Activated naive CD4-positive, alpha-beta T cell treated with anti-CD3 and anti-CD28 coated beads for 36 hours (primary cell): ENCODE measurements at regions of chr11 and their contacts with region 1.

Region 1: GRCh38 chr11:104705490-104706190 is 192.6 kb downstream of the CASP12 start:
- DNase-seq: peak; percentile 89
- H3K4me3 Mint-ChIP-seq: peak overlapping the region; percentile 61
- H3K27ac Mint-ChIP-seq: peak overlapping the region; percentile 80
- H3K4me1 Mint-ChIP-seq: peaks cover 48% of the 10 kb centered on the region
- H3K27me3 Mint-ChIP-seq: no peaks in the 10 kb centered on the region

Region 2: DNA sequence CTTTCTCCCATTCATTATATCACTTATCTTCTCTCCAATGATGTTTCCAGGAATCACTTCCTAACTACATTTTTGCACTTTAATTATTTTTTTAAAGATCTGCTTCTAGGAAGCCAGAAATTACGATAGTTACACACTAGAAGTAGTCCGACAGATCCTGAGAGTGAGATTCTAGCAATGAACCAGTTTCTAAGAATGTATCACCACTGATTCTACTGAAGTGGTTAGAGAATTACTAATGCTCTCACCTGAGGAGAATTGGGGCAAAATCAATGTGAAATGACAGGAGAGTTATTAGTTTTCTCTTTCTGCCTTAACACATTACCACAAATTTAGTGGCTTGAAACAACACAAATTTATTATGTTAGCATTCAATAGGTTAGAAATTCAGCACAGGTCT is 48.6 kb before region 1 on chr11:
- CTCF ChIA-PET with region 1: no interaction called
- intact Hi-C with region 1: loop called (anchors 1 kb)
- DNase-seq: no peak
- H3K4me3 Mint-ChIP-seq: no peak overlapping the region
- H3K27ac Mint-ChIP-seq: no peak overlapping the region
- H3K4me1 Mint-ChIP-seq: peaks cover 20% of the 10 kb centered on the region
- H3K27me3 Mint-ChIP-seq: peaks cover 2% of the 10 kb centered on the region

Region 3: GRCh38 chr11:104728927-104729326 is 23.3 kb after region 1 on chr11:
- CTCF ChIA-PET with region 1: no interaction called
- intact Hi-C with region 1: no loop called
- DNase-seq: no peak
- H3K4me3 Mint-ChIP-seq: no peak overlapping the region
- H3K27ac Mint-ChIP-seq: no peak overlapping the region
- H3K4me1 Mint-ChIP-seq: peaks cover 6% of the 10 kb centered on the region
- H3K27me3 Mint-ChIP-seq: no peaks in the 10 kb centered on the region

Region 4: GRCh38 chr11:104799251-104799650 is 93.6 kb after region 1 on chr11:
- CTCF ChIA-PET with region 1: no interaction called
- intact Hi-C with region 1: loop called (anchors 1 kb)
- DNase-seq: no peak
- H3K4me3 Mint-ChIP-seq: peak overlapping the region; percentile 53
- H3K27ac Mint-ChIP-seq: peak overlapping the region; percentile 68
- H3K4me1 Mint-ChIP-seq: peaks cover 34% of the 10 kb centered on the region
- H3K27me3 Mint-ChIP-seq: no peaks in the 10 kb centered on the region

Region 5: DNA sequence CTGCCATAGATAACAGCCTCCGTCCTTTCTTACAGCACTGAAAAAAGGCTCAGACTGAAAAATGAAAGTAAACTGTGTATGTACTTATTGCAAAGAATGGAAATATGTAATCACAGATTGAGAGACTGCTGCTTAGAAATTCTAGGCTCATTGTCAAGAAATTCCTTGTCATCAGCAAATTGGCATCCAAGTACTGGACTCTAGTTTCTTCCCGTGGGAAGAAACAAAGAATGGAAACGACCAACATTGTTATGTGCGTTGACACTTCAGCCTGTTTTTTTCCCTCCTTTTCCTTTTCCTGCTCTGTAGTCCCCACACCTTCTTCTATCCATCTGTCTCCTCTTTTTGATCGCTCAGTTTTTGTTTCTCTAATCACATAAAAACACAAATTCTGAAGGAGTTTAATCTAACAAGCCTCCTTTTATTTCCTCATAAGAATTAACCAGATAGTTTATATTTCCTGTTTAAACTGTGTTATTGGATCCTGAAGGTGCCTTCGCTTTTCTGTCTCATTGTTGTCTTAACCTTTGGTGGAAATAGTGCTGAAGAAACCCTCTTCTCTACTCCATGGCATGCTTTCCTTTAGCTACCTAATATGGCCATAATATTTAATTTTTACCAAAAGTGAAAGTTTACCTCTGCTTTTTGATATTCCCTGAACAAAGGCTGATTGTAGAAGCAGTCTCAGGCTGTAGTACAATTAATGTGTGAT is 212.6 kb after region 1 on chr11:
- CTCF ChIA-PET with region 1: no interaction called
- intact Hi-C with region 1: loop called (anchors 1 kb)
- DNase-seq: no peak
- H3K4me3 Mint-ChIP-seq: peak overlapping the region; percentile 59
- H3K27ac Mint-ChIP-seq: peak overlapping the region; percentile 78
- H3K4me1 Mint-ChIP-seq: peaks cover 38% of the 10 kb centered on the region
- H3K27me3 Mint-ChIP-seq: no peaks in the 10 kb centered on the region

Region 6: GRCh38 chr11:105081412-105082087 is 375.9 kb after region 1 on chr11:
- CTCF ChIA-PET with region 1: no interaction called
- intact Hi-C with region 1: loop called (anchors 5 kb)
- DNase-seq: no peak
- H3K4me3 Mint-ChIP-seq: no peak overlapping the region
- H3K27ac Mint-ChIP-seq: no peak overlapping the region
- H3K4me1 Mint-ChIP-seq: peaks cover 20% of the 10 kb centered on the region
- H3K27me3 Mint-ChIP-seq: peaks cover 8% of the 10 kb centered on the region

Region 7: DNA sequence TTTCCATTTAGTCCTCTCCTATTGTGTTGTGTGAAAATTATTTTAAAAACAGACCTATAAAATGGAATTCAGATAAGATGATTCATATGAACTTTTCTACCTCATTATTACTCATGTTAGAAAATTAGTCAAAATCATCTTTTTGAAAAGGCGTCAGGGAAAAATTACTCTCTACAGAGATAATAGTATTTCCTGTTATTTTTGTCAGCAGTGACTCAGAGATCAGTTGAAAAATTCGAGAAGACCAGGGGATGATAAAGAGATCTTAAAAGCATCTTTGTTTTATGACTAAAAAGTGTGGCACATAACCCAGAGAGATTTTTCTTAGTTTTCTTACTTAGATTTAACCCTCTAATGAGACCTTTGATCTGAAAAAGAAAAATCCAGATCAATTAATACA is 591.8 kb after region 1 on chr11:
- CTCF ChIA-PET with region 1: no interaction called
- intact Hi-C with region 1: loop called (anchors 1 kb)
- DNase-seq: no peak
- H3K4me3 Mint-ChIP-seq: no peak overlapping the region
- H3K27ac Mint-ChIP-seq: peak overlapping the region; percentile 34
- H3K4me1 Mint-ChIP-seq: peaks cover 18% of the 10 kb centered on the region
- H3K27me3 Mint-ChIP-seq: peaks cover 11% of the 10 kb centered on the region

Region 8: DNA sequence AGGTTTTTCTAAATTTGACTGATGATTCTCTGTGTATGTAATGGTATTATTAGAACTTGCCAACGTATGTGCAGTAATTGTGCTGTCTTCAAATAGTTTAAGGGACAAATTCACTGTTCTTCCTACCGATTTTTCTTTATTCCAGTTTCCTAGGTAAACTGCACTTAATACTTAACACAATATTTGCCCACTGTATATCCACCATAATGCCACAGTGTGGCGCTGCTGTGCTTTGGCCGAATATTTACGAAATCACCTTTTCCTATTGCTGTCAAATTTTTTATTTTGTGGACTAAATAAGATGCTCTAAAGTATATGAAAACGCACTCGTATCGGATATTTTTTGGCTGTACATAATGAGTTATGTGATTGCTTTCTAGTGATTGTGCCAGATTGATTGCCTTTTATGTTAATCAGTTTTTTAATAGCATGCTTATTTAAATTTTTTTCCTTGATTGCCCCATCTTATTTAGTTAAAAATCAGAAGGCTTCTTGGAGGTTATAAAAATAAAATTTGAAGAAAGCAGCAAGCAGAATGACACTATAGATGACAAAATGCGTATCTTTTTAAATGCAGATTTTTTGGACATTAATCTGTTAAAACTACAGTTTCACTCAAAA is 1382.3 kb after region 1 on chr11:
- CTCF ChIA-PET with region 1: no interaction called
- intact Hi-C with region 1: loop called (anchors 5 kb)
- DNase-seq: peak; percentile 69
- H3K4me3 Mint-ChIP-seq: no peak overlapping the region
- H3K27ac Mint-ChIP-seq: no peak overlapping the region
- H3K4me1 Mint-ChIP-seq: peaks cover 58% of the 10 kb centered on the region
- H3K27me3 Mint-ChIP-seq: no peaks in the 10 kb centered on the region